ENCODE measurements at regions of chr18 and their contacts with region 1.

Region 1: GRCh38 chr18:27017901-27018500 is 152.5 kb upstream of the AQP4 start:
- DNase-seq: no peak
- ATAC-seq: peak in 2 of 4 donors; percentile 54 to 76
- H3K4me3 ChIP-seq: no peak overlapping the region
- H3K27ac ChIP-seq: no peak overlapping the region
- H3K4me1 ChIP-seq: peaks cover 0 to 9% (median 0%) of the 10 kb centered on the region in 12 donors
- H3K27me3 ChIP-seq: no peaks in the 10 kb centered on the region
- CTCF ChIP-seq: peak; percentile 31 to 68 (median 56)
- POLR2A ChIP-seq: no peak

Region 2: GRCh38 chr18:27185025-27185763 is 167.2 kb after region 1 on chr18 and contains the start of gene CHST9:
- intact Hi-C with region 1: loop called in 3 of 10 experiments (anchors 5 to 10 kb)
- DNase-seq: peak in 4 of 5 donors; percentile 23 to 63 (median 46)
- ATAC-seq: peak; percentile 55 to 87 (median 65)
- H3K4me3 ChIP-seq: peak within 1 kb of the TSS; percentile 33 to 77 (median 50)
- H3K27ac ChIP-seq: peak within 1 kb of the TSS in 1 of 12 donors; percentile 57
- H3K4me1 ChIP-seq: peaks cover 0 to 7% (median 0%) of the 10 kb centered on the region in 12 donors
- H3K27me3 ChIP-seq: peaks cover 0 to 38% (median 0%) of the 10 kb centered on the region in 9 donors
- CTCF ChIP-seq: no peak
- POLR2A ChIP-seq: no peak
- total RNA-seq, gene CHST9: 0.37 to 20.2 (median 4.8) TPM

Region 3: DNA sequence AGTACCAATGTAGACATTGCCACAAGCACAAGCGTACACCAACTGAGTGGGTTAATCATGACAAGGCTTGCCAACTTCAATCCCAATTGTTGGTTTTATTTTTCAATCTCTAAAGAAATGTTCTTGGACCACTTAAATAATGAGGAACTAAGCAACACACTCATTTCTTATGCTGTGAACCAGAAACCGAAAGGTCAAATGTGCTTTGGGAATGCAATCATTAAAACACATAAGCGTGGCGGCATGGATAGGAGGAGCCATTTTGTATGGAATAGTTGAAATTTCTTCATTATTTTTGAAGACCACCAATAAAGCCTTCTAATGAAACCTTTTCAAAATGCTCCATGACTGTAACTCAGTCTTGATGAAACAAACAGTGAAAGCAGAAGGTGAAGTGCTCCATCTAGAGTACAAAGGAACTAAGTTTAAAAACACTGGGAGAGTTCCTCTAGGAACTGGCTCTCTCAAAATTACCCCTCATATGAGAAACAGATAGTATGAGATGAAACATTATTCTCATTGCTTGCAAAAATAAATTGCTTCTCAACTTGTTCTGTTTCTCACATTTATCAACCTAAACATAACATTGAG is 280.3 kb after region 1 on chr18:
- intact Hi-C with region 1: loop called in 9 of 10 experiments (anchors 1 to 5 kb)
- DNase-seq: no peak
- ATAC-seq: peak in 3 of 4 donors; percentile 52 to 67 (median 65)
- H3K4me3 ChIP-seq: no peak overlapping the region
- H3K27ac ChIP-seq: no peak overlapping the region
- H3K4me1 ChIP-seq: no peaks in the 10 kb centered on the region
- H3K27me3 ChIP-seq: no peaks in the 10 kb centered on the region
- CTCF ChIP-seq: peak in 11 of 12 donors; percentile 15 to 56 (median 46)
- POLR2A ChIP-seq: no peak

Region 4: GRCh38 chr18:27599202-27599829 is 581.3 kb after region 1 on chr18:
- intact Hi-C with region 1: loop called in 6 of 10 experiments (anchors 2 to 10 kb)
- DNase-seq: peak in 3 of 5 donors; percentile 14 to 39 (median 26)
- ATAC-seq: no peak
- H3K4me3 ChIP-seq: no peak overlapping the region
- H3K27ac ChIP-seq: no peak overlapping the region
- H3K4me1 ChIP-seq: no peaks in the 10 kb centered on the region
- H3K27me3 ChIP-seq: no peaks in the 10 kb centered on the region
- CTCF ChIP-seq: peak; percentile 51 to 87 (median 74)
- POLR2A ChIP-seq: no peak

Region 5: DNA sequence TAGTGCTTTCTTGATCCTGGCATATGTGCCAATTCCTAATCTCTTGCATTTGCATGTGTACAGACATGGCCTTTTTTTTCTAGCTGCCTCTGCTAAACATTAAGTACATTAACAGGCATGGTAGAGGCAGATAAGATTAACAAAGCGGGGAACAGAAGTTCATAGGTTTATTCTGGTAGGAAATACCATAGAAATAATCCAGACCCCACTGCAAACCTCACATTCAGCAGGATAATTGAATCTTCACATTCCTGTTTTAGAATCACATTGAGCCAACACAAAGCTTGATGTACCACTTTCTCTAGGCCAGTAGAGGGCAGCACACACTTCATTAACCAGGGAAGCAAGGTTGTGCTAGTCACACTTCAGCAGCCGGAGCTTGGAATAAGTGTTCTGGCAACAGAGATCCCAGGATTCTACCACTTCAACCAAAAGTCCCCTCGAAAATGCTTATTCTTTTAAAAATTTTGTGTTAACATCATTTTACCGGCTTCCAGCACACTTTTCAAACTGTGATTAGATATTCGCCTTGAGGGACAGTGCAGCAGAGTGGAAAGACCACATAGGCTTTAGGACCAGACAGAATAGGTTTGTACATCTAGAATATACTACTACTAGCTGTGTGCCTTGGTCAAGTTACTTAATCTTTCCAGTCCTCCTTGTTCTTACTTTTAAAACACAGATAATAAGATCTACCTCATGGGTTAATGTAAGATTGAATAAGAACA is 587.3 kb after region 1 on chr18:
- intact Hi-C with region 1: loop called in 2 of 10 experiments (anchors 5 to 10 kb)
- DNase-seq: peak in 4 of 5 donors; percentile 33 to 56 (median 46)
- ATAC-seq: peak in 3 of 4 donors; percentile 86 to 94 (median 86)
- H3K4me3 ChIP-seq: no peak overlapping the region
- H3K27ac ChIP-seq: no peak overlapping the region
- H3K4me1 ChIP-seq: no peaks in the 10 kb centered on the region
- H3K27me3 ChIP-seq: no peaks in the 10 kb centered on the region
- CTCF ChIP-seq: peak; percentile 67 to 87 (median 72)
- POLR2A ChIP-seq: no peak

Measured in heart left ventricle (tissue), 16 donors.